ENCODE measurements at regions of chr2 and their contacts with region 1.

Region 1: DNA sequence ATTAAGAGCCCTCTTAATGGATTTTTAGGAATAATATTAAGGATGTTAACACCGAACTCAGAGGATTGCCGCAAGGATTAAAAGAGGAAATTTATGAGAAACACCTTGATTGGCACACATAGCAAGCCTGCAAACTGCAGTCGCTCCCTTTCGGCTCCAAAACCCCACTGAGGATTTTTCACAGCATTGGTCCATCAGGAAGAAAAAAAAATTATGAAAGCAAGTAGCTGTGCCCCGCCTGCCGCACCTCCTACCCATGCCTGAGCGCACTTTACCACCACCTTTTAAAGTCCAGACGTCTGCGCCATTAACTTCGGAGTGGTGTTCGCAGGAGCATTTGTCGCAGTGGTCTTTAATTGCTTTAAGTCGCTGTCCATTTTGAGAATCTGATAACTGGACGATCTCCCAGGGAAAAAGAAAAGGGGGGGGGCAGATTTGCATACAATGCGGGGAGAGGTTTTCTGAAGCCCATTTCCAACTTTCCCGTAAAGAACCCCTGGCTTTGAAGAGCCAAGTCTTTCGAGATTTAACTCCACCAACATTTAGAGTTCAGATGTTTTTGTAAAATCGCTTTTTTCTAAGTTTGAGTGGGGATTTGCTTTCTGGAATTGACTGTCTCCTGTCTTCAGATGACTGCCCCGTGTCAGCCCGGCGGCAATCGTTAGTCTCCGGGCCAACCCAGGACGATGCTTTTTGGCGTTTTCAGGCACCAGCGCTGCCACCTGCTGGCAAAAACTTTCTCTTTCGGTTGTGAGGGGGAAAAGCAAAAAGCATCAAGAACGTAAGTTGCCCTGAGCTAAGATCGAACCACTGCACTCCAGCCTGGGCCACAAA is 914 bp upstream of the TRABD2A start:
- DNase-seq: peak; percentile 82 to 86 (median 85)
- H3K4me3 ChIP-seq: peak overlapping the region; percentile 67 to 93
- H3K4me3 Mint-ChIP-seq: peak overlapping the region; percentile 90 to 99 (median 96)
- H3K27ac ChIP-seq: peak overlapping the region; percentile 72
- H3K27ac Mint-ChIP-seq: peak overlapping the region; percentile 84 to 98 (median 97)
- H3K4me1 ChIP-seq: peaks cover 32% of the 10 kb centered on the region
- H3K4me1 Mint-ChIP-seq: peaks cover 25 to 60% (median 42%) of the 10 kb centered on the region in 4 donors
- H3K27me3 ChIP-seq: no peaks in the 10 kb centered on the region
- H3K27me3 Mint-ChIP-seq: no peaks in the 10 kb centered on the region

Region 2: DNA sequence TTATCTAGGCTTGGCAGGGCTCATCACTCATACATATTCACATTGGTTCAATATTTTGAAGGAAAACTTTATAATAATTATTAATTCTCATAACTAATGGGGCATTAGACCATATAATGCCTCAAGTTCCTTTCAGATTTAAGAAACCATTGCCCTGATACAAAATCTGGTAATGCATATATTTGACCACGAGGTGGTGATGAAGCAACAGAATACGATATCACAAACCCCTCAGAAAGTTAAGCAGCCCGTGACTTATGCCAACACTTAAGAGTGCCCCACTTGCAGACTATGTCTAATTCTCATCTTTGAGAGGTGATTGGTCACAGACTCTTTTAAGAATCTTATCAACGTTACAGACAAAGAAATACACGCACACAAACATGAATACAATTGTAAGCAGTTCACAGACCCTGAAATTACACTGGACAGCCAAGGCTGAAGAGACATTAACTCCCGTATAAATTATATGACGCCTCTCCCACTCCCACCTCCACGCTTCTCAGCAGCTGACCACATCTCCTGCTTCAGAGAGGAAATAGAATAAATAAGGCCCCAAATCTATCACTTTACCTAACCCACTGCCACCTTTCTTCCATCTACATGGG is 386.2 kb before region 1 on chr2:
- CTCF ChIA-PET with region 1: interaction called, 16 read pairs
- POLR2A ChIA-PET with region 1: interaction called, 3 read pairs
- intact Hi-C with region 1: loop called (anchors 1 kb)
- DNase-seq: peak; percentile 63 to 75 (median 71)
- H3K4me3 ChIP-seq: no peak overlapping the region
- H3K4me3 Mint-ChIP-seq: no peak overlapping the region
- H3K27ac ChIP-seq: no peak overlapping the region
- H3K27ac Mint-ChIP-seq: peak overlapping the region in 6 of 7 donors; percentile 39 to 84 (median 60)
- H3K4me1 ChIP-seq: peaks cover 8% of the 10 kb centered on the region
- H3K4me1 Mint-ChIP-seq: peaks cover 6 to 14% (median 7%) of the 10 kb centered on the region in 4 donors
- H3K27me3 ChIP-seq: no peaks in the 10 kb centered on the region
- H3K27me3 Mint-ChIP-seq: no peaks in the 10 kb centered on the region

Region 3: GRCh38 chr2:84631047-84631446 is 250.8 kb before region 1 on chr2:
- CTCF ChIA-PET with region 1: interaction called, 8 read pairs
- POLR2A ChIA-PET with region 1: no interaction called
- intact Hi-C with region 1: loop called (anchors 1 kb)
- DNase-seq: peak in 4 of 5 donors; percentile 46 to 57 (median 56)
- H3K4me3 ChIP-seq: no peak overlapping the region
- H3K4me3 Mint-ChIP-seq: peak overlapping the region in 1 of 8 donors; percentile 36
- H3K27ac ChIP-seq: no peak overlapping the region
- H3K27ac Mint-ChIP-seq: peak overlapping the region in 3 of 7 donors; percentile 30 to 65 (median 59)
- H3K4me1 ChIP-seq: peaks cover 24% of the 10 kb centered on the region
- H3K4me1 Mint-ChIP-seq: peaks cover 26 to 31% (median 28%) of the 10 kb centered on the region in 4 donors
- H3K27me3 ChIP-seq: no peaks in the 10 kb centered on the region
- H3K27me3 Mint-ChIP-seq: no peaks in the 10 kb centered on the region

Region 4: GRCh38 chr2:84846041-84846663 is 35.6 kb before region 1 on chr2:
- CTCF ChIA-PET with region 1: interaction called, 11 read pairs
- POLR2A ChIA-PET with region 1: interaction called, 77 read pairs
- intact Hi-C with region 1: loop called (anchors 2 kb)
- DNase-seq: peak; percentile 67 to 84 (median 78)
- H3K4me3 ChIP-seq: peak overlapping the region; percentile 11 to 15
- H3K4me3 Mint-ChIP-seq: peak overlapping the region; percentile 31 to 84 (median 74)
- H3K27ac ChIP-seq: peak overlapping the region; percentile 61
- H3K27ac Mint-ChIP-seq: peak overlapping the region; percentile 92 to 99 (median 97)
- H3K4me1 ChIP-seq: peaks cover 99% of the 10 kb centered on the region
- H3K4me1 Mint-ChIP-seq: peaks cover 81 to 98% (median 90%) of the 10 kb centered on the region in 4 donors
- H3K27me3 ChIP-seq: no peaks in the 10 kb centered on the region
- H3K27me3 Mint-ChIP-seq: no peaks in the 10 kb centered on the region

Region 5: DNA sequence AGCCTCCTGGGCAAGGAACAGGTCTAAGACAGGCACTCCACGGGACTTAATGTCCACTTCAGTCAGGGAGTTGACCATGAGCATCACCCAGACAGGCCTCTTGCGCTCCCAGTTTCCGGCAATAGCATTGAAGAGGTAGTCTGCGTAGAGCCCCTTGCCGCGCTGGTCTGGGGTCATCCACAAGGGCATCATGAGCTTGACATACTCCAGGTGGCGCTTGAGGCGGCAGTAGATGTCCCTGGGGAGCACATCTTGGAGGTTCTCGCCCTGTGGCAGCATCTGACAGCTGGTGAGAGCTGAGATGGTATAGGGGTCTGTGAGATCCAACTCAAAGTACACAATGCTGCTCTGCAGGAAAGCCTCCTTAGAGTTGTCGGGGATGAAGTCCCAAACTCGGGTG is 11.5 kb before region 1 on chr2:
- CTCF ChIA-PET with region 1: interaction called, 29 read pairs
- POLR2A ChIA-PET with region 1: interaction called, 19 read pairs
- intact Hi-C with region 1: loop called (anchors 1 kb)
- DNase-seq: no peak
- H3K4me3 ChIP-seq: no peak overlapping the region
- H3K4me3 Mint-ChIP-seq: peak overlapping the region in 6 of 8 donors; percentile 4 to 74 (median 38)
- H3K27ac ChIP-seq: no peak overlapping the region
- H3K27ac Mint-ChIP-seq: peak overlapping the region; percentile 48 to 93 (median 81)
- H3K4me1 ChIP-seq: peaks cover 75% of the 10 kb centered on the region
- H3K4me1 Mint-ChIP-seq: peaks cover 56 to 87% (median 72%) of the 10 kb centered on the region in 4 donors
- H3K27me3 ChIP-seq: no peaks in the 10 kb centered on the region
- H3K27me3 Mint-ChIP-seq: no peaks in the 10 kb centered on the region

Region 6: DNA sequence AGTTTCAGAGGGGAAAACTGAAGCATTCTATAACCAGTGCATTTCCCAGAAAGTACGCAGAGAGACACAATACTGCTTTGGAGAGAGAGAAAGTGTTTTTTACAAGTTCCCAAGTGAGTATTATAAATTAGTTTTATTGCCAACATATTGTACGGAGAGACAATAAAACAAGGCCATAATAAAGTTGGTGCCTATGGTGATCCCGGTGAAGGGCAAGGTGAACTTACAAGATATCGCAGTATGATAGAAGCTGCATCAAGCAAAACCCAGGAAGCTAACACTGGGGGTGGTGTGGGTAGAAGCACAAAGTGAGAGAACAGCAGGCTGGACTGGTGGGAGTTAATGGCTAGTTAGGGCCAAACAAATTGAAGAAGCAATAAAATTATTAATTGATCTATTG is 31.2 kb after region 1 on chr2:
- CTCF ChIA-PET with region 1: interaction called, 271 read pairs
- POLR2A ChIA-PET with region 1: interaction called, 204 read pairs
- intact Hi-C with region 1: no loop called
- DNase-seq: no peak
- H3K4me3 ChIP-seq: no peak overlapping the region
- H3K4me3 Mint-ChIP-seq: peak overlapping the region in 1 of 8 donors; percentile 18
- H3K27ac ChIP-seq: no peak overlapping the region
- H3K27ac Mint-ChIP-seq: peak overlapping the region in 1 of 7 donors; percentile 76
- H3K4me1 ChIP-seq: peaks cover 19% of the 10 kb centered on the region
- H3K4me1 Mint-ChIP-seq: peaks cover 20 to 29% (median 25%) of the 10 kb centered on the region in 4 donors
- H3K27me3 ChIP-seq: no peaks in the 10 kb centered on the region
- H3K27me3 Mint-ChIP-seq: no peaks in the 10 kb centered on the region

Region 7: GRCh38 chr2:85445316-85446295 is 563.8 kb after region 1 on chr2:
- CTCF ChIA-PET with region 1: no interaction called
- POLR2A ChIA-PET with region 1: no interaction called
- intact Hi-C with region 1: no loop called
- DNase-seq: no peak
- H3K4me3 ChIP-seq: no peak overlapping the region
- H3K4me3 Mint-ChIP-seq: no peak overlapping the region
- H3K27ac ChIP-seq: no peak overlapping the region
- H3K27ac Mint-ChIP-seq: no peak overlapping the region
- H3K4me1 ChIP-seq: no peaks in the 10 kb centered on the region
- H3K4me1 Mint-ChIP-seq: no peaks in the 10 kb centered on the region
- H3K27me3 ChIP-seq: no peaks in the 10 kb centered on the region
- H3K27me3 Mint-ChIP-seq: no peaks in the 10 kb centered on the region

Measured in CD4-positive, alpha-beta memory T cell (primary cell).